ENCODE measurements at regions of chr14 and their contacts with region 1.

Region 1: GRCh38 chr14:77457522-77458290 is at the starts of genes AHSA1 and VIPAS39:
- DNase-seq: peak; percentile 99
- H3K4me3 Mint-ChIP-seq: peak within 1 kb of the TSS; percentile 96
- H3K27ac Mint-ChIP-seq: peak within 1 kb of the TSS; percentile 95
- H3K4me1 Mint-ChIP-seq: peaks cover 14% of the 10 kb centered on the region
- H3K27me3 Mint-ChIP-seq: no peaks in the 10 kb centered on the region
- CTCF ChIP-seq: no peak
- total RNA-seq, gene AHSA1: 77.7 and 78.5 TPM in 2 replicates
- total RNA-seq, gene VIPAS39: 18.7 and 19.8 TPM in 2 replicates

Region 2: DNA sequence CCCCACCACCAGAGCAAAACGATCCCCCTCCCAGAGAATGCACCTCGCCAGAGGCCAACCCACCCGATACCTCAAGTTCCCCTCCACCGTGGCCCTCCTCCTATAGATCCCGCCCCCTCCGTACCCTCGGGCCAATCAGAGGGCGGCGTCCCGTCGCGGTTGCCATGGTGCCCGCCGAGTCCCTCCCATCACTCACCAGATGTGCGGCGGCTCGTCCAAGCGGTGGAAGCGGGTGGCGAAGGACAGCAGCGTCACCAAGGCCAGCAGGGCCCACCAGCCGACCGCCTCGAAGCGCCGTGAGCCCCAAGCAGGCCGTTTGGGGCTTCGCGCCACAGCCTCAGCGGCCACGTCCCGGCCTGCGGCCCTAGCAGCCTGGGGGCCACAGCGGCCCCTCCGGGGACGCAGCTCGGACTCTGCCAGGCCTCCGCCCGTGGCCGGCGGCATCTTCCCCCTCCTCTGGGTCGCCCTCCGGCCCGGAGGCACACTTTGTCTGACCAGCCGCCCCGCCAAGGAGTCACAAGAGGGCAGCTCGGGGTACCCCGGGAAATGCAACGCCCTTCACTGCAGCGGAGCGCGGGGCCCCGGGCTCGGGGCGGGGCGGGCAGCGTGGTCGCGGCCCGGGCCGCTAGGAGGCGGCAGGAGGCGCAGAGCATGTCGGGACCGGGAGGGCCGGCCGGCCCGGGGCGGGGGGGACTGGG is 137.3 kb before region 1 on chr14 and contains the start of gene POMT2:
- CTCF ChIA-PET with region 1: no interaction called
- POLR2A ChIA-PET with region 1: interaction called, 21 read pairs
- intact Hi-C with region 1: loop called (anchors 5 kb)
- DNase-seq: peak; percentile 93
- H3K4me3 Mint-ChIP-seq: peak within 1 kb of the TSS; percentile 83
- H3K27ac Mint-ChIP-seq: peak within 1 kb of the TSS; percentile 95
- H3K4me1 Mint-ChIP-seq: peaks cover 28% of the 10 kb centered on the region
- H3K27me3 Mint-ChIP-seq: no peaks in the 10 kb centered on the region
- CTCF ChIP-seq: peak; percentile 28
- total RNA-seq, gene POMT2: 32.1 and 33.0 TPM in 2 replicates

Region 3: GRCh38 chr14:77335576-77335975 is 122.1 kb before region 1 on chr14:
- CTCF ChIA-PET with region 1: no interaction called
- POLR2A ChIA-PET with region 1: no interaction called
- intact Hi-C with region 1: no loop called
- DNase-seq: no peak
- H3K4me3 Mint-ChIP-seq: no peak overlapping the region
- H3K27ac Mint-ChIP-seq: no peak overlapping the region
- H3K4me1 Mint-ChIP-seq: peaks cover 6% of the 10 kb centered on the region
- H3K27me3 Mint-ChIP-seq: no peaks in the 10 kb centered on the region
- CTCF ChIP-seq: no peak

Region 4: GRCh38 chr14:77442196-77442595 is 15.5 kb before region 1 on chr14:
- CTCF ChIA-PET with region 1: interaction called, 6 read pairs
- POLR2A ChIA-PET with region 1: interaction called, 17 read pairs
- intact Hi-C with region 1: no loop called
- DNase-seq: no peak
- H3K4me3 Mint-ChIP-seq: no peak overlapping the region
- H3K27ac Mint-ChIP-seq: no peak overlapping the region
- H3K4me1 Mint-ChIP-seq: no peaks in the 10 kb centered on the region
- H3K27me3 Mint-ChIP-seq: no peaks in the 10 kb centered on the region
- CTCF ChIP-seq: no peak

Region 5: GRCh38 chr14:77554207-77554606 is 96.5 kb after region 1 on chr14:
- CTCF ChIA-PET with region 1: interaction called, 74 read pairs
- POLR2A ChIA-PET with region 1: interaction called, 4 read pairs
- intact Hi-C with region 1: loop called (anchors 1 kb)
- DNase-seq: no peak
- H3K4me3 Mint-ChIP-seq: no peak overlapping the region
- H3K27ac Mint-ChIP-seq: no peak overlapping the region
- H3K4me1 Mint-ChIP-seq: no peaks in the 10 kb centered on the region
- H3K27me3 Mint-ChIP-seq: no peaks in the 10 kb centered on the region
- CTCF ChIP-seq: no peak

Region 6: GRCh38 chr14:77663306-77663715 is 205.6 kb after region 1 on chr14:
- CTCF ChIA-PET with region 1: no interaction called
- POLR2A ChIA-PET with region 1: no interaction called
- intact Hi-C with region 1: no loop called
- DNase-seq: peak; percentile 90
- H3K4me3 Mint-ChIP-seq: peak overlapping the region; percentile 6
- H3K27ac Mint-ChIP-seq: peak overlapping the region; percentile 68
- H3K4me1 Mint-ChIP-seq: peaks cover 11% of the 10 kb centered on the region
- H3K27me3 Mint-ChIP-seq: no peaks in the 10 kb centered on the region
- CTCF ChIP-seq: no peak

Region 7: DNA sequence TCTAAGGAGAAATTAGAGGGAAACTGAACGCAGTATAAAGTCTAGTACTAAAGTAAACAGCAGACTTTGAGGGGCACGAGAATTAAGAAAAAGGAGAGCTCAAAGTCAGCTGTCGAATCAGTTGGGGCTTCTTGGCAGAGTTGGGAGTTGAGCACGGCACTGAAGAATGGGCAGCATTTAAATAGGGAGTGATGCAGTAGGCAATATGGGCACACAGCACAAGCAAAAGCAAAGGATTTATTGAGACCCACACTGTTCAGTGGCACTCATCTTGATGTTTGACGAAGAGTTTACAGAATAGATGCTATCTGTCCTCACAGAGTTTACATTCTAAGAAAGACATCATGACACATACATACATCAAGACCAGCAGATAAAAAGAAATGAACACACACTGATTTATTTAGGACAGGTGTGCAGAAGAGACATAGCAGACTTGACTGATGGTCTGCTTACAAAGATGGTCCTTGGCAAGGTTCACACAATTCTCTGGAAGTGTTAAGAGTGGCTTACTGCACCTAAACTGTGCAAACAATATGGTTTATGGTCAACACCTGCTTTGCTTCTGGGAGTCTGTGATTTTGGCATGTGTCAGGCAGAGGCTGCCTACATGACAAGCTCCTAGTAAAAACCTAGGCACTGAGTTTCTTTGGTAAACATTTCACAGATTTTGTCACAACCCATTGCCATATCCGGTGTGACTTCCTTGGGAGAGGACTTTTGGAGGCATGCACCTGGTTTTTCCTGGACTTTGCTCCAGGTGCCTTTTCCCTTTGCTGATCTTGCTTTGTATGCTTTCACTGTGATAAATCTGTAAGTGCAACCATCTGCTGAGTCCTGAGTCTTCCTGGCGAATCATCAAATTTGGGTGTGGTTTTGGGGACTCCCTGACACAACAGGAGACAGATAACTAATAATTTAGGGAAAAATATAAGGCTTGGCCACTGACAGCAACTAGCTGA is 223.8 kb after region 1 on chr14:
- CTCF ChIA-PET with region 1: no interaction called
- POLR2A ChIA-PET with region 1: no interaction called
- intact Hi-C with region 1: no loop called
- DNase-seq: peak; percentile 30
- H3K4me3 Mint-ChIP-seq: no peak overlapping the region
- H3K27ac Mint-ChIP-seq: peak overlapping the region; percentile 55
- H3K4me1 Mint-ChIP-seq: peaks cover 22% of the 10 kb centered on the region
- H3K27me3 Mint-ChIP-seq: no peaks in the 10 kb centered on the region
- CTCF ChIP-seq: no peak

Region 8: GRCh38 chr14:77760381-77761246 is 302.9 kb after region 1 on chr14 and contains the start of gene SNW1:
- CTCF ChIA-PET with region 1: no interaction called
- POLR2A ChIA-PET with region 1: interaction called, 13 read pairs
- intact Hi-C with region 1: no loop called
- DNase-seq: peak; percentile 93
- H3K4me3 Mint-ChIP-seq: peak within 1 kb of the TSS; percentile 89
- H3K27ac Mint-ChIP-seq: peak within 1 kb of the TSS; percentile 96
- H3K4me1 Mint-ChIP-seq: peaks cover 14% of the 10 kb centered on the region
- H3K27me3 Mint-ChIP-seq: no peaks in the 10 kb centered on the region
- CTCF ChIP-seq: no peak
- total RNA-seq, gene SNW1: 113 and 122 TPM in 2 replicates